Psoas muscle (tissue), 8 donors: ENCODE measurements at regions of chr4 and their contacts with region 1.

Region 1: DNA sequence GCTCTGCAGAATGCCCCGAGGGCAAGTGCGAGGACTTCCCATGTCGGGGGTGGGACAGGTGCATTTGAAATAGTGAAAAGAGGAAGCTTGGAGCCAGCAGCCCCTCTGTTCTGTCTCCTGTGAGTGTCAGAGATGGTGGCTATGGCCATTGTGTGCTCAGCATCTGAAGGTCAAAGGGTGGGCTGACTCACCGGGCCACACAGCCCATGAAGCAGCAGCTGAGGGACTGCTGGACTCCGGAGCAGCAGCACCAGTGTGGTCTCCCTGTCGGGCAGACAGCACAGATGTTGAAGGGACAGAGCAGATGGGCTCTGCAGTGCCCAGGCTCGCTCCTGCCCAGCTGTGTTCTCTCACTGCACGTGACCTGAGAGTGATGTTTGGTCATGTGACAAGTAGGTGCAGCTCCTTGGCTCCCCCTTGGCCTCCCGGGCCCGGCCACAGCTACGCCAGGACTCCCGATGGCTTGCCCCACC is 53.5 kb downstream of the TBC1D14 start:
- DNase-seq: no peak
- ATAC-seq: peak; percentile 14 to 55 (median 32)
- H3K4me3 ChIP-seq: no peak overlapping the region
- H3K27ac ChIP-seq: no peak overlapping the region
- H3K4me1 ChIP-seq: peaks cover 30% of the 10 kb centered on the region
- H3K27me3 ChIP-seq: no peaks in the 10 kb centered on the region
- CTCF ChIP-seq: no peak

Region 2: GRCh38 chr4:6925357-6925836 is 37.8 kb before region 1 on chr4:
- intact Hi-C with region 1: loop called in 1 of 2 experiments (anchors 2 kb)
- DNase-seq: peak in 1 of 2 donors; percentile 48
- ATAC-seq: peak; percentile 17 to 71 (median 41)
- H3K4me3 ChIP-seq: no peak overlapping the region
- H3K27ac ChIP-seq: peak overlapping the region; percentile 68
- H3K4me1 ChIP-seq: peaks cover 42% of the 10 kb centered on the region
- H3K27me3 ChIP-seq: no peaks in the 10 kb centered on the region
- CTCF ChIP-seq: no peak